A673 (cell line): ENCODE measurements at regions of chr1 and their contacts with region 1.

Region 1: DNA sequence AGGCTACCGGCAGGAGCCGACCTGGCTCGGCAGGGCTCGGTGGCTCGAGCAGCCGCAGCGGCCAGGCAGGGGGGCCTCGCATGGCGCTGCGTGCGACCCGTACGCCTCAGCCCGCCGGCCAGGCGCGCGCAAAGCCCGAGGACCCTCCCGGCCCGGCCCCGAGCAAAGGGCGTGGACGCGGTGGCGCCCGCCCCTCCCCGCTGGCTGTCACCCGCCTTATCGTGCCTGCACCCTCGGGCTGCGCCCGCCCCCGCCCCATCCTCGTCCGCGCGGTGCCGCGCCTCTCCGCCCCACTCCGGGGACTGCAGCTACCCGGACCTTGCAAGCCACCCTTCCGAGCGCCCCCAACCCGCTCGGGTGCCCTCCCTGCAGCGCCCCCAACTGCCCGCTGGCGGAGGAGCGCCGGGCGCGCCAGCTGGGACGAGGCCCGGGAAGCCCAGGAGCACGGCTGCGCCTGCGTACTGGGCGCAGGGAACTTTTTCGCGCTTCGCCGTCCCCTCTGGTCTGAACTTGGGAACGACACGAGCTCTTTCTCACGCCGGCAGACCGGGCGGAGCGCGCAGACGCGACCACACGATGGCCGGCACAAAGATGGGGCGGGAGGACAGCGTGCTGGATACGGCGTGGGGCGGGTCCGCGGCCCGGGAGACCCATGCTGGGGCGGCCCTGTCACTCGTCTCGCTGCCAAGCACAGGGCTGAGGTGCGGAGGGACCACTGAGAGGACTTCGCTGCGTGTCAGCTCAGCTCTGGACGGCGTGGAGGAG is at the start of gene ABCB10:
- DNase-seq: peak; percentile 98
- H3K4me3 ChIP-seq: peak within 1 kb of the TSS; percentile 94
- H3K27ac ChIP-seq: peak within 1 kb of the TSS; percentile 75
- H3K4me1 ChIP-seq: peaks cover 19% of the 10 kb centered on the region
- H3K27me3 ChIP-seq: no peaks in the 10 kb centered on the region
- CTCF ChIP-seq: peak; percentile 94
- total RNA-seq, gene ABCB10: 20.0 and 23.3 TPM in 2 replicates

Region 2: GRCh38 chr1:229579059-229579673 is 20.4 kb after region 1 on chr1:
- CTCF ChIA-PET with region 1: interaction called, 3 read pairs
- POLR2A ChIA-PET with region 1: interaction called, 14 read pairs
- intact Hi-C with region 1: no loop called
- DNase-seq: peak; percentile 70
- H3K4me3 ChIP-seq: peak overlapping the region; percentile 13
- H3K27ac ChIP-seq: no peak overlapping the region
- H3K4me1 ChIP-seq: peaks cover 12% of the 10 kb centered on the region
- H3K27me3 ChIP-seq: no peaks in the 10 kb centered on the region
- CTCF ChIP-seq: no peak

Region 3: GRCh38 chr1:229614701-229615100 is 55.9 kb after region 1 on chr1:
- CTCF ChIA-PET with region 1: interaction called, 4 read pairs
- POLR2A ChIA-PET with region 1: no interaction called
- intact Hi-C with region 1: loop called (anchors 2 kb)
- DNase-seq: no peak
- H3K4me3 ChIP-seq: no peak overlapping the region
- H3K27ac ChIP-seq: no peak overlapping the region
- H3K4me1 ChIP-seq: no peaks in the 10 kb centered on the region
- H3K27me3 ChIP-seq: no peaks in the 10 kb centered on the region
- CTCF ChIP-seq: no peak

Region 4: GRCh38 chr1:229625915-229626831 is 67.4 kb after region 1 on chr1 and contains the starts of genes TAF5L and URB2:
- CTCF ChIA-PET with region 1: no interaction called
- POLR2A ChIA-PET with region 1: interaction called, 3 read pairs
- intact Hi-C with region 1: loop called (anchors 1 kb)
- DNase-seq: peak; percentile 95
- H3K4me3 ChIP-seq: peak within 1 kb of the TSS; percentile 99
- H3K27ac ChIP-seq: peak within 1 kb of the TSS; percentile 90
- H3K4me1 ChIP-seq: peaks cover 22% of the 10 kb centered on the region
- H3K27me3 ChIP-seq: no peaks in the 10 kb centered on the region
- CTCF ChIP-seq: no peak
- total RNA-seq, gene TAF5L: 27.8 and 33.4 TPM in 2 replicates
- total RNA-seq, gene URB2: 26.2 and 33.3 TPM in 2 replicates

Region 5: DNA sequence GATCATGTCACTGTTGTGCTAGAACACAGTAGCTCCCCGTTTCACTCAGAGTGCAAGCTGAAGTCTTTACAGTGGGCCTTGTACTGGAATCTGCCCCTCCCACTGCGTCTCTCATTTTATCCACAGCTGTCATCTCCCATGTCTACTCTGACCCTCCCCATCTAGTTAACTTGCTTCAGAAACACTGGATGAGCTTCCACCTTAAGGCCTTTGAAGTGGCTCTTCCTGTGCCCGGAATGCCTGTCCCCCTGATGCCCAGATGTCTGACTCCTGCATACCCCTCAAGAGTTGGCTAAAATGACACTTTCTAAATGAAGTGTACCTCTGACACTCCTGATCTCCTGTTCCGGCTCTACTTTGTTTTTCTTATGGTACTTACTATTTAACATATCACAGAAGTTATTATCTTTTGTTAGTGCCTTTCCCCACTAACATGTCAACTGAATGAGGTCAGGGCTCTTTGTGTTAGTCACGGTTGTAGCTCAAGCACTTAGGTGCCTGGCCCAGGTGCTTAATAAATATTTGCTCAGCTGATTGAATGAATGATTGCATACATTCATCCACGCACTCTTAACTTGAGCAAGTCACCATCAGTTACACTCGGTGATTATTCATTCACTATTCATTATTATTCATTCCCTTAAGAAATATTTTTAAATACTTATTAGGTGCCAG is 1433.5 kb after region 1 on chr1:
- CTCF ChIA-PET with region 1: no interaction called
- POLR2A ChIA-PET with region 1: interaction called, 13 read pairs
- intact Hi-C with region 1: no loop called
- DNase-seq: no peak
- H3K4me3 ChIP-seq: no peak overlapping the region
- H3K27ac ChIP-seq: no peak overlapping the region
- H3K4me1 ChIP-seq: peaks cover 5% of the 10 kb centered on the region
- H3K27me3 ChIP-seq: no peaks in the 10 kb centered on the region
- CTCF ChIP-seq: no peak